GM23248 (cell line): ENCODE measurements at regions of chr15 and their contacts with region 1.

Region 1: DNA sequence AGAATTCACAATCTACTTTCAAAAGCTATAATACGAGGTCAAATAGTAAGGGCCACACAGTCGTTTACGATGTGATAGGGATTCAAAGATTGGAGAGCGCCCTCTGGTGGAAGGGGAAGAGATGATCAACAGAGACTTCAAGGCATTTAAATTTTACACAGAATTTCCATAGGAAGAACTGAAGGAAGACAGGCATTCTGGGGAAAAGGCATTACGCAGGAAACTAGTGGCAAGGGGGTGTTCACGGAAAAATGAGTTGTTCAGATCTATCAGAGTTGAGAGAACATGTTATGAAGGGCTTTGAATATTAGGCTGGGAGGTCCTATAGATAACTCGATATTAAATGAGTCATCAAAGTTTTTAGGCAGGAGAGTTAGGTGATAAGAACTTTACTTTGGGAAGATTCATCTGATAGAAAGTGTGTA is 128.7 kb downstream of the FRMD5 start:
- DNase-seq: peak; percentile 82
- H3K4me3 ChIP-seq: no peak overlapping the region
- H3K27ac ChIP-seq: no peak overlapping the region
- H3K4me1 ChIP-seq: peaks cover 6% of the 10 kb centered on the region; the same call in 1 of the 2 replicates
- H3K27me3 ChIP-seq: no peaks in the 10 kb centered on the region

Region 2: GRCh38 chr15:43824302-43825246 is 241.8 kb before region 1 on chr15 and contains the start of gene MFAP1:
- in situ Hi-C with region 1: no loop called
- DNase-seq: peak; percentile 98
- H3K4me3 ChIP-seq: peak within 1 kb of the TSS; percentile 98
- H3K27ac ChIP-seq: peak within 1 kb of the TSS; percentile 94
- H3K4me1 ChIP-seq: peaks cover 26% of the 10 kb centered on the region; the same call in 1 of the 2 replicates
- H3K27me3 ChIP-seq: no peaks in the 10 kb centered on the region
- total RNA-seq, gene MFAP1: 14.4 and 24.6 TPM in 2 replicates

Region 3: GRCh38 chr15:43903864-43904290 is 162.5 kb before region 1 on chr15:
- in situ Hi-C with region 1: loop called (anchors 10 kb)
- DNase-seq: peak; percentile 65
- H3K4me3 ChIP-seq: no peak overlapping the region
- H3K27ac ChIP-seq: no peak overlapping the region
- H3K4me1 ChIP-seq: no peaks in the 10 kb centered on the region
- H3K27me3 ChIP-seq: no peaks in the 10 kb centered on the region

Region 4: DNA sequence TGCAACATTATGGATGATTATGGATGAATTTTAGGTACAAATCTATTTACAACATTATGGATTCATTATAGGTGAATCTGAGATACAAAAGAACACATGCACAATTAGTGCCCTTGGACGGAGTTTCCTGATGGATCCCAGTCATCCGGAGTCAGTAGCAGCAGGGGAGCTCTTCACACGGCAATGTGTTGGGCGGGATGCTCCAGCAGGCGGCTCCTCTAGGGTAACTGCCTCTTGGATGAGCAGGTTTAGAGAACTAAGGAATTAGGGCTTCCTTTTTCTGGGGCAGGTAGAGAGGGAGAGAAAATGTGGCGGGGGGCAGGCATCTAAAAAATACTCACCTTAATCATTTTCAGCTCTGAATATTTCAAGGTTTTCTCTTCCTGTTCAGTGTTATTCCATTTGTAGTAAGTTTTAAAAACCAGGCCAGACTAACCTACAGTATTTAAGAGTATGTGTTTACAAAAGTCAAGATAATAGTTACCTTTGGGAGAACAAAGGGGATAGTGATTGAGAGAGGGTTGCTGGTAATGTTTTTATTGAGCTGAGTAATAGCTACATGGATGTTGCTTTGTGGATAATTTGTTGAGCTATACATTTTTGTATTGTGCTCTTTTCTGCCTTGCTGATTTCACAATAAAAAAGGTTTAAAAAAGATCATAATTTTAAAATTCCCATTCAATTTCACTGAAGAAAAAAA is 194.8 kb after region 1 on chr15:
- in situ Hi-C with region 1: no loop called
- DNase-seq: no peak
- H3K4me3 ChIP-seq: no peak overlapping the region
- H3K27ac ChIP-seq: no peak overlapping the region
- H3K4me1 ChIP-seq: no peaks in the 10 kb centered on the region
- H3K27me3 ChIP-seq: peaks cover 13% of the 10 kb centered on the region